Dendritic cell treated with granulocyte-macrophage colony-stimulating factor and Interleukin-4, amounts not matched to agents 40 ng/mL and 50 ng/mL, for 4 days (primary cell): ENCODE measurements at regions of chr2 and their contacts with region 1.

Region 1: DNA sequence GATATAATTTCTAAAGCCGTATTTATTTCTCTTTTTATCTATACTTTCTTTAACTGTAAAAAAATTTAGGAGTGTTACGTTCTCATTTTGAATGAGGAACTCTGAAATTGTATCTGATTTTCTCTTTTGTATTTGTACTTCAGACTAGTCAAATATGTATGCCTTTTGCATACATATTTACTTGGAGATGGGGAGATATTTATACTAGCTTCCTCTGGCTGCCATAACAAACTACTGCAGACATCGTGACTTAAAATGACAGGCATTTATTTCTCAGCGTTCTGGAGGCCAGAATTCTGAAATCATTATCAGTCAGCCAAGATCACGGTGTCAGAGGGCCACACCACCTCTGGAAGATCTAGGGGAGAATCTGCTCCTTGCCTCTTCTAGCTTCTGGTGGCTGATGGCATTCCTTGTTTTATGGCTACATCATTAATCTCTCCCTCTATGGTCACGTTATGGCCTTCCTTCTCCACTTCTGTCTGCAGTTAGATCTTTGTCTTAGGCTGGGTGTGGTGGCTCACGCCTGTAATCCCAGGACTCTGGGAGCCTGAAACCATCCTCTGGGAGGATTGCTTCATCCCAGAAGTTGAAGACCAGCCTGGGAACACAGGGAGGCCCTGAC is 8.2 kb downstream of the LCLAT1 start:
- H3K4me3 Mint-ChIP-seq: no peak overlapping the region
- H3K27ac Mint-ChIP-seq: no peak overlapping the region
- H3K4me1 Mint-ChIP-seq: peaks cover 17% of the 10 kb centered on the region
- H3K27me3 Mint-ChIP-seq: no peaks in the 10 kb centered on the region

Region 2: DNA sequence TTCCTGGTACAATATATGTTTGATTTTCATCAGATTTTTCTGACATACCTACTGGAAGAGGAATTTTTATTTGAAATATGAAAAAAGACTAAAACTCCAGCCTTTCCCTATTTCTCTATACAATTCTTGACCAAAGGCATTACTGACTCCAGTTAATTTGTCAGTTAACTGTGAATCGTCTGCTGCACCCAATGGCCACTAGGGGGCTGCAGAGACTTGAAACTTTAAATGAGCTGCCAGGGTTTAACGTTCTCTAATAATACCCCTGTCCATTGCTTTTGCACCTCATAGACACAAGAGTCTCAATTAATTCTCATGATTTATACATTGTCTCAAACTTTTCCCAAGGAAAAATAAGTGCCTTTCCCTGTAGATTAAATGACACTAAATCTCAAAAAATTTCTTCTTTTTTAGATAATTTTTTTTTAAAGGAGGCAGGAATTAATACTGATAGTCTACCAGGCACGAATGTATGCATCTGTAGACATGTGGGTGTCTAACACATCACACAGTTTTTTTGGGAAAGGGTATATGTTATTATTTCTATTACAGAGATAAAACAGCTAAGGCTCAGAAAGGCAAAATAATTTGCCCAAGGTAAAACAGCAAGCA is 532.0 kb before region 1 on chr2:
- intact Hi-C with region 1: no loop called
- H3K4me3 Mint-ChIP-seq: no peak overlapping the region
- H3K27ac Mint-ChIP-seq: no peak overlapping the region
- H3K4me1 Mint-ChIP-seq: peaks cover 15% of the 10 kb centered on the region
- H3K27me3 Mint-ChIP-seq: peaks cover 44% of the 10 kb centered on the region

Region 3: DNA sequence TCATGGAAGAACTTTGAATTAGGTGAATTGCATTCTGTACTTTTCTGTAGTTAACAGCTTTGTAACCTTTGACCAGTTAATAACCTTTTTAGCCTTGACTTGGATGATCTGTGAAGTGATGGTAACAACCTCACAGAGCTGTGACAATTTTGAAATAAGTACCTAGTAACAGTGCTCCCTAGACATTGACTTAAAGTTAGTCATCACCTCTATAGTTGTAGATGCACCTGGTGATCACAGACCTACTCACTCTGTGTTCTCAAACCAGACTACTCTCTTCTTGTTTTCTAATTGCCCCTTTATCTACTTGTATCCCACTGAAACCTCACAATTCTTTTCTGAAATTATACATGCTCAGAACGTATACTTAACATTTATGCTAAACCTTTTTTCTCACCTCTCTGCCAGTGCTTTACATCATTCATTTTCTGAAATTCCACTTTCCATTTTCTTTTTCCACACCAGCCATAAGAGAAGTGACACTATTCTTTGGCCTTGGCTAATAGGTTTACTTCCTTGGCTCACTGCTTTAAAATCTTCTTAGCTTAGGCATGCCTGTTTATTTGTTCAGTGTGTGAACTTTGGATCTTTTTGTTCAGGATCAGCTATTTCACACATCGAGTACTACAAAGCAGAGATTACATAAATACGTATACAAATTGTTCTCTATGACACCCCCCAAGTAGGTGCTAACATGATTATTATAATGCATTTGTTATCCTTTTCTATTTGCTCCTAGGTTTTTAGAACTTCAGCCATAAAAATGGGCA is 299.2 kb before region 1 on chr2:
- intact Hi-C with region 1: loop called (anchors 10 kb)
- H3K4me3 Mint-ChIP-seq: no peak overlapping the region
- H3K27ac Mint-ChIP-seq: no peak overlapping the region
- H3K4me1 Mint-ChIP-seq: peaks cover 29% of the 10 kb centered on the region
- H3K27me3 Mint-ChIP-seq: no peaks in the 10 kb centered on the region

Region 4: DNA sequence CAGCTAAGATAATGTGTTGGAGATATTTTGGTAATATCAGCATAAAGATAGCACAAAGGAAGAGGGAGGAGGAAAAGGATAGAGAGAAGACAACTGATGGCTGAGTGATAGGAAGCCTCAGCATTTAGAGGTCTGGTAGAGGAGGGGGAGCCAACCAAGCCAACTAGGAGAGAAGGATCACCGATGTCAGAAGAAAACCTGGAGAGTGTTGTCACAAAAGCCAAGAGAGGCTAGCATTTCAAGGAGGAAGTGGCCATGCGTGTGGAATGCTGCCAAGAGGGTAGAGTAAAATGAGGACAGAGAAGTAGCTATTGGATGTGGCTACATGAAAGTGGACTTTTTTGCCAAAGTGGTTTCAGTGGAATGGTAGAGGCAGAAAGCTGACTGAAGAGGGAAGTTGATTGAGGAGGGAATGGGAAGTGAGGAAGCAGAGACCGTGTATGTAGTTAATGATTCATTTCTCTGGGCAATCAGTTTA is 26.1 kb after region 1 on chr2:
- intact Hi-C with region 1: no loop called
- H3K4me3 Mint-ChIP-seq: peak overlapping the region; percentile 4
- H3K27ac Mint-ChIP-seq: peak overlapping the region; percentile 73
- H3K4me1 Mint-ChIP-seq: peaks cover 20% of the 10 kb centered on the region
- H3K27me3 Mint-ChIP-seq: no peaks in the 10 kb centered on the region